ENCODE measurements at regions of chr22 and their contacts with region 1.

Region 1: GRCh38 chr22:32474635-32475467 is at the start of gene FBXO7:
- DNase-seq: peak; percentile 37
- ATAC-seq: peak; percentile 84
- H3K4me3 ChIP-seq: peak within 1 kb of the TSS; percentile 73
- H3K27ac ChIP-seq: peak within 1 kb of the TSS; percentile 84
- H3K4me1 ChIP-seq: peaks cover 7% of the 10 kb centered on the region
- H3K27me3 ChIP-seq: no peaks in the 10 kb centered on the region
- CTCF ChIP-seq: peak in 1 of 3 experiments; percentile 30; a peak in 2 of 6 replicates
- EP300 ChIP-seq: no peak
- POLR2A ChIP-seq: peak; percentile 92
- RAD21 ChIP-seq: no peak
- polyA plus RNA-seq, gene FBXO7: 37.3 to 48.4 TPM

Region 2: GRCh38 chr22:31970490-31971444 is 504.1 kb before region 1 on chr22:
- CTCF ChIA-PET with region 1: interaction called, 8 read pairs
- POLR2A ChIA-PET with region 1: no interaction called
- RAD21 ChIA-PET with region 1: no interaction called
- SMC1A ChIA-PET with region 1: no interaction called
- in situ Hi-C with region 1: loop called (anchors 5 kb)
- intact Hi-C with region 1: loop called (anchors 5 kb)
- DNase-seq: peak; percentile 20
- ATAC-seq: peak; percentile 95
- H3K4me3 ChIP-seq: peak overlapping the region; percentile 76; the same call in 1 of the 2 replicates
- H3K27ac ChIP-seq: no peak overlapping the region
- H3K4me1 ChIP-seq: peaks cover 14% of the 10 kb centered on the region
- H3K27me3 ChIP-seq: no peaks in the 10 kb centered on the region
- CTCF ChIP-seq: peak; percentile 84 to 98 (median 92)
- EP300 ChIP-seq: no peak
- POLR2A ChIP-seq: no peak
- RAD21 ChIP-seq: peak; percentile 67

Region 3: GRCh38 chr22:31977141-31977841 is 497.6 kb before region 1 on chr22:
- CTCF ChIA-PET with region 1: interaction called, 13 read pairs
- POLR2A ChIA-PET with region 1: no interaction called
- RAD21 ChIA-PET with region 1: interaction called, 4 read pairs
- SMC1A ChIA-PET with region 1: interaction called, 9 read pairs
- in situ Hi-C with region 1: loop called (anchors 5 kb)
- intact Hi-C with region 1: loop called (anchors 5 kb)
- DNase-seq: peak; percentile 24
- ATAC-seq: peak; percentile 98
- H3K4me3 ChIP-seq: no peak overlapping the region
- H3K27ac ChIP-seq: no peak overlapping the region
- H3K4me1 ChIP-seq: no peaks in the 10 kb centered on the region
- H3K27me3 ChIP-seq: no peaks in the 10 kb centered on the region
- CTCF ChIP-seq: peak; percentile 78 to 83 (median 80)
- EP300 ChIP-seq: no peak
- POLR2A ChIP-seq: no peak
- RAD21 ChIP-seq: peak; percentile 83

Region 4: GRCh38 chr22:32202539-32203180 is 272.2 kb before region 1 on chr22:
- CTCF ChIA-PET with region 1: interaction called, 6 read pairs
- POLR2A ChIA-PET with region 1: no interaction called
- RAD21 ChIA-PET with region 1: no interaction called
- SMC1A ChIA-PET with region 1: no interaction called
- in situ Hi-C with region 1: no loop called
- intact Hi-C with region 1: loop called (anchors 5 kb)
- DNase-seq: no peak
- ATAC-seq: peak; percentile 79
- H3K4me3 ChIP-seq: no peak overlapping the region
- H3K27ac ChIP-seq: no peak overlapping the region
- H3K4me1 ChIP-seq: no peaks in the 10 kb centered on the region
- H3K27me3 ChIP-seq: peaks cover 0 to 4% of the 10 kb centered on the region in 2 experiments; a peak in 2 of 4 replicates
- CTCF ChIP-seq: peak; percentile 43 to 54 (median 49)
- EP300 ChIP-seq: no peak
- POLR2A ChIP-seq: no peak
- RAD21 ChIP-seq: 0 out of 2 replicates have a peak, but pooled peaks have one; percentile 12

Region 5: DNA sequence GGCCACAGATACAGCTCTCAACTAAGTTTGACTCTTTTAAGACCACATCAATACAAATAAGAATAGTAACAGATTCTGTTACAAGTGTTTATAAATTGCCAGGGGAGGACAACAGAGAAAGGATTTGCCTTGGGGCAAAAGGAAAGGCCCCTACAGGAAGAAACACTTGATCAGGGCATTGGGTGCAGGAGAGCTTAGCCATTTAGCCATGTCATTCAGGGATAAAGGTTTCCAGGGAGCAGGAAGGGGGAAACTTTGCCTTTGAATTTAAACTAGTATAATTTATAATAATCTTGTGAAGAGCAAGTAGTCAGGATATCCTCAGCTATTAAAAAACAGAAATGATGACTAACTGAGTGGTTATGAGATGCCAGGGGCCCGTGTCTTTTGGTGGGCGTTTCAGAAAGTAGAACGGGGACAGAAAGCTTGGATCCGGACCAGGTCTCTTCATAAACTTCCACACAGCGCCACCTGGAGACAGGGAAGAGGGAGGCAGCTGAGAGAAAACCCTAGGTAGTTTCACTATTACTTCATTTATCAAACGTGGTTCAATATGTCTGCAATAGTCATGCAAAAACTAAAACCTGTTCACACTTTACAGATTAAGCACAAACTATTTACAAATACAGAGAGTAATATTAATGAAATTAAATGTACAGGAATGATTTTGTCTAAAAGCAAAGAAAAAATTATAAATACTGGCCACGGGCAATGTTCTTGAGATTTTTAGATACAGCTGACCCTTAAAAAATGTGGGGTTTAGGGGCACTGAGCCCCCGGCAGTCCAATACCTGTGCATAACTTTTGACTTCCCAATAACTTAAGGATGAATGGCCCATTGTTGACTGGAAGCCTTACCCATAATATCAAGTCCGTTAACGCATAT is 208.7 kb before region 1 on chr22:
- CTCF ChIA-PET with region 1: interaction called, 10 read pairs
- POLR2A ChIA-PET with region 1: no interaction called
- RAD21 ChIA-PET with region 1: no interaction called
- SMC1A ChIA-PET with region 1: interaction called, 4 read pairs
- in situ Hi-C with region 1: no loop called
- intact Hi-C with region 1: no loop called
- DNase-seq: no peak
- ATAC-seq: peak; percentile 82
- H3K4me3 ChIP-seq: no peak overlapping the region
- H3K27ac ChIP-seq: no peak overlapping the region
- H3K4me1 ChIP-seq: no peaks in the 10 kb centered on the region
- H3K27me3 ChIP-seq: 0 out of 4 replicates have a peak, but pooled peaks cover 0 to 1% of the 10 kb centered on the region in 2 experiments
- CTCF ChIP-seq: peak; percentile 73 to 83 (median 79)
- EP300 ChIP-seq: no peak
- POLR2A ChIP-seq: no peak
- RAD21 ChIP-seq: peak; percentile 51

Region 6: GRCh38 chr22:32411829-32412592 is 62.8 kb before region 1 on chr22 and contains the start of gene RTCB:
- CTCF ChIA-PET with region 1: interaction called, 39 read pairs
- POLR2A ChIA-PET with region 1: interaction called, 7 read pairs
- RAD21 ChIA-PET with region 1: interaction called, 26 read pairs
- SMC1A ChIA-PET with region 1: interaction called, 28 read pairs
- in situ Hi-C with region 1: no loop called
- intact Hi-C with region 1: loop called (anchors 2 kb)
- DNase-seq: peak; percentile 80
- ATAC-seq: peak; percentile 71
- H3K4me3 ChIP-seq: peak within 1 kb of the TSS; percentile 81
- H3K27ac ChIP-seq: peak within 1 kb of the TSS; percentile 85
- H3K4me1 ChIP-seq: peaks cover 16% of the 10 kb centered on the region
- H3K27me3 ChIP-seq: no peaks in the 10 kb centered on the region
- CTCF ChIP-seq: 0 out of 6 replicates have a peak, but pooled peaks of 1 of the 3 experiments have one; percentile 0
- EP300 ChIP-seq: no peak
- POLR2A ChIP-seq: peak; percentile 72
- RAD21 ChIP-seq: no peak
- polyA plus RNA-seq, gene RTCB: 108 to 203 TPM

Region 7: GRCh38 chr22:32660292-32660691 is 185.4 kb after region 1 on chr22:
- CTCF ChIA-PET with region 1: no interaction called
- POLR2A ChIA-PET with region 1: no interaction called
- RAD21 ChIA-PET with region 1: no interaction called
- SMC1A ChIA-PET with region 1: no interaction called
- in situ Hi-C with region 1: no loop called
- intact Hi-C with region 1: no loop called
- DNase-seq: no peak
- ATAC-seq: peak; percentile 78
- H3K4me3 ChIP-seq: no peak overlapping the region
- H3K27ac ChIP-seq: no peak overlapping the region
- H3K4me1 ChIP-seq: no peaks in the 10 kb centered on the region
- H3K27me3 ChIP-seq: no peaks in the 10 kb centered on the region; a peak in 1 of 4 replicates
- CTCF ChIP-seq: peak; percentile 73 to 78 (median 76)
- EP300 ChIP-seq: no peak
- POLR2A ChIP-seq: no peak
- RAD21 ChIP-seq: peak; percentile 68